Activated B cell treated with CpG ODN at 0.5 μM for 24 hours (primary cell): ENCODE measurements at regions of chr17 and their contacts with region 1.

Region 1: DNA sequence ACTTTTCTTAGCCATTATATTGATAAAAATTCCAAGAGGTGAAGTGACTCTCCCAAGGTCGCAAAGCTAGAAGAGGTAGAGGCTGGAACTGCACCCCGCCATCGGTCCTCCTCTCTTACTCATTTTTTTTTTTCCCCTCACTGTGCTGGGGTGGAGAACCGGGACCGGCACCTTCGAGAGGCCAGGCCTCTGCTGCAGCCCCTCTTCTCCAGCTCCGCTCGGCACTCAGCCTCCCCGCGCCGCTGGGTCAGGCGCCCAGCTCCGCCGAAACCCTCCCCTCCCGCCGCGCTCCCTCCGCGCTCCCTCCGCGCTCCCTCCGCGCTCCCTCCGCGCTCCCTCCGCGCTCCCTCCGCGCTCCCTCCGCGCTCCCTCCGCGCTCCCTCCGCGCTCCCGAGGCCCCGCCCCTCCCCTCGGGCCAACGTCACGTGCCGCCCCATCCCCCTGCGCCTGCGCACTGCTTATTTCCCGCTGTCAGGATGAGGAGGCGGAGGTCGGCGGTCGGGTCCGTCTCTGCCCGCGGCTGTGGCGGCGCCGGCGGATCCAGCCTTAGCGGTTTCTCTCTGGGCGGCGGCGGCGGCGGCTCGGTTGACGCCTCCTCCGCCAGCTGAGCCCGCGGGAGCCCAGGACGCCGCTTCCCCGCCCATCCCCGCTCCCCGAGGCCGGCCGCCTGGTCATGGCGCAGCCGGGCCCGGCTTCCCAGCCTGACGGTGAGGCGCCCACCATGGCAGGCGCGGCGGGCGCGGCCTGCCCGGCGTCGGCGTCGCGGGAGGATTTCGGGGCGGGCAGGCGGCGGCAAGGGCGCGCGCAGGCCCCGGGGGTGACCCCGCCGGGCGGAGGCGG is at the start of gene RABEP1:
- DNase-seq: peak; percentile 90
- ATAC-seq: peak; percentile 82
- H3K4me3 Mint-ChIP-seq: peak within 1 kb of the TSS; percentile 92
- H3K27ac Mint-ChIP-seq: peak within 1 kb of the TSS; percentile 91
- H3K4me1 Mint-ChIP-seq: peaks cover 46% of the 10 kb centered on the region
- H3K27me3 Mint-ChIP-seq: no peaks in the 10 kb centered on the region
- CTCF ChIP-seq: no peak
- total RNA-seq, gene RABEP1: 63.5 and 67.5 TPM in 2 replicates

Region 2: GRCh38 chr17:4509401-4509800 is 772.6 kb before region 1 on chr17:
- CTCF ChIA-PET with region 1: no interaction called
- POLR2A ChIA-PET with region 1: no interaction called
- intact Hi-C with region 1: no loop called
- DNase-seq: no peak
- ATAC-seq: no peak
- H3K4me3 Mint-ChIP-seq: no peak overlapping the region
- H3K27ac Mint-ChIP-seq: no peak overlapping the region
- H3K4me1 Mint-ChIP-seq: peaks cover 2% of the 10 kb centered on the region
- H3K27me3 Mint-ChIP-seq: peaks cover 41% of the 10 kb centered on the region
- CTCF ChIP-seq: no peak

Region 3: DNA sequence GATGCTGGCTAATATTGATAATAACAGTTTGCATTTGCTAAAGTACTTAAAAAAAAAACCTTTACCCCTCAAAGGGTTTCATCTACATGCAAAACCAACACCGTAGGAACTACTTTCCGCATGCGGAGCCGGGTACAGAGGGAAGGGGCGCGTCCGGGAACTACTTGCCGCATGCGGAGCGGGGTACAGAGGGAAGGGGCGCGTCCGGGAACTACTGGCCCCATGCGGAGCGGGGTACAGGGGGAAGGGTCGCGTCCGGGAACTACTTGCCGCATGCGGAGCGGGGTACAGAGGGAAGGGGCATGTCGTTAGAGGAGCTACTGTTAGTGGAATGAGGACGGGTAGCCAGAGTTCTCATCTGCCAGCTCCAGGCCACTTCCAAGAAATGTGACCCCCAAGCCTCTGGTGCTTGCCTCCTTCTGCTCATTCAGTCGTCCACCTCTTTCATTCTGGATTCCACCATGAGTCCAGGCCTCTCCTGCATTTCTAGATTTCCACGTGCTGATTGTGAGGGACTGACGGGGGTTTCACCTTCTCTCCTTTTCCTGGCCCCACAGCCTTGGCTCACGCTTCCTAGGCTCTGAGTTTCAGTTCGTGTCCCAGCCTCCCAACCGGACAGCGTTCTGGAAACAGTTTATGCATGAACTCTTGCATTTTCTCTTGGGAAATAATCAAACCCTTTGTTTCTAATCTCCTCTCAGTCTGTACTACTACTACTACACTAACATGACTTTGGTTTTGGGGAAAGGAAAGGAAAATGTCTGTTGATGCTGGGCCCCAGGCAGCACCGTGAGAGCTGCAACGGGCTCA is 422.0 kb before region 1 on chr17:
- CTCF ChIA-PET with region 1: no interaction called
- POLR2A ChIA-PET with region 1: no interaction called
- intact Hi-C with region 1: no loop called
- DNase-seq: no peak
- ATAC-seq: no peak
- H3K4me3 Mint-ChIP-seq: no peak overlapping the region
- H3K27ac Mint-ChIP-seq: no peak overlapping the region
- H3K4me1 Mint-ChIP-seq: peaks cover 1% of the 10 kb centered on the region
- H3K27me3 Mint-ChIP-seq: no peaks in the 10 kb centered on the region
- CTCF ChIP-seq: no peak

Region 4: GRCh38 chr17:4966844-4967538 is 315.0 kb before region 1 on chr17:
- CTCF ChIA-PET with region 1: no interaction called
- POLR2A ChIA-PET with region 1: no interaction called
- intact Hi-C with region 1: no loop called
- DNase-seq: no peak
- ATAC-seq: peak; percentile 87
- H3K4me3 Mint-ChIP-seq: no peak overlapping the region
- H3K27ac Mint-ChIP-seq: no peak overlapping the region
- H3K4me1 Mint-ChIP-seq: peaks cover 18% of the 10 kb centered on the region
- H3K27me3 Mint-ChIP-seq: no peaks in the 10 kb centered on the region
- CTCF ChIP-seq: no peak

Region 5: DNA sequence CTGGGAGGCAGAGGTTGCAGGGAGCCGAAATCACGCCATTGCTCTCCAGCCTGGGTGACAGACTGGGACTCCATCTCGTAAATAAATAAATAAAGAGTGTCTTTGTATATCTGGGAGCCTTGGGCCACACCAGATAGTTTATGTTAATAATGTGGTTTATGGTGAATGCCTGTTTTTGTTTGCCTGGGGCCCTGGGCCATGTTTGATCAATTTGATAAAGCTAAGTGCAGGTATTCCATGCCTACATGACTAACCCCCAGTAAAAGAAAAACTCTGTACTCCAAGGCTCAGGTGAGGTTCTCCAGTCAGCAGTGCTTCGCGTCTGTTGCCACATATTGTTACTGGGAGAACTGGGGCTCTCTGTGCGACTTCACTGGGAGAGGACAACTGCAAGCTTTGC is 62.5 kb before region 1 on chr17:
- CTCF ChIA-PET with region 1: no interaction called
- POLR2A ChIA-PET with region 1: no interaction called
- intact Hi-C with region 1: no loop called
- DNase-seq: no peak
- ATAC-seq: no peak
- H3K4me3 Mint-ChIP-seq: no peak overlapping the region
- H3K27ac Mint-ChIP-seq: peak overlapping the region; percentile 98
- H3K4me1 Mint-ChIP-seq: peaks cover 63% of the 10 kb centered on the region
- H3K27me3 Mint-ChIP-seq: no peaks in the 10 kb centered on the region
- CTCF ChIP-seq: no peak

Region 6: DNA sequence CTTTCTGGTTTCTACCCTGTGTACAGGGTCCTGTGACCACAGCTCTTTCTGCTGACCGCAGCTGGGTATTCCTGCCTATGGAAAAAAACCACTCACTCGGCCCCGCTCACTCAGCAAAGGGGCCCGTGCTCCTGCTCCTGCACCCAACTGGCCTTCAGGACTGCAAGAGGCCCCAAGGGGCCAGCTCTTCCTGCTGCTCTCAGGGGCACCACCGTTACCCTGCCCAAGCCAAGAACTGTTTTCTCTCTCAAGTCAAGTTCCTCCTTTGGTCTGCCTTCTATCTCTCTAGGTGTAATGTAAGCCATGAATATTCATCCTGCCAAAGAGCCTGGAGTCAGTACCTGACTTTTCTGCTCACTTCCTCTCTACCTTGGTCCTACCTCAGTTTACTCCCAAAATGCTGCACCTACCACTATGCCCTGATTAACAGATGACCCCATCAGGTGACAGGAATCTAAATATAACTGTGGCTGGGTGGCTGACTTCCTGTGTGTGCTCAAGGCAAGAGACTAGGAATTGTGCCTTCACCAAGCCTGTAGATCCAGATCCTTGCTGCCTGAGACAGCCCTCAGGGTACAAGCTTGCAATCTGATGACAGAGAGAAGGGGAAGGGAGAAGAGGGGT is 27.0 kb before region 1 on chr17:
- CTCF ChIA-PET with region 1: no interaction called
- POLR2A ChIA-PET with region 1: interaction called, 37 read pairs
- intact Hi-C with region 1: loop called (anchors 2 kb)
- DNase-seq: no peak
- ATAC-seq: peak; percentile 89
- H3K4me3 Mint-ChIP-seq: peak overlapping the region; percentile 78
- H3K27ac Mint-ChIP-seq: peak overlapping the region; percentile 93
- H3K4me1 Mint-ChIP-seq: peaks cover 70% of the 10 kb centered on the region
- H3K27me3 Mint-ChIP-seq: no peaks in the 10 kb centered on the region
- CTCF ChIP-seq: no peak

Region 7: DNA sequence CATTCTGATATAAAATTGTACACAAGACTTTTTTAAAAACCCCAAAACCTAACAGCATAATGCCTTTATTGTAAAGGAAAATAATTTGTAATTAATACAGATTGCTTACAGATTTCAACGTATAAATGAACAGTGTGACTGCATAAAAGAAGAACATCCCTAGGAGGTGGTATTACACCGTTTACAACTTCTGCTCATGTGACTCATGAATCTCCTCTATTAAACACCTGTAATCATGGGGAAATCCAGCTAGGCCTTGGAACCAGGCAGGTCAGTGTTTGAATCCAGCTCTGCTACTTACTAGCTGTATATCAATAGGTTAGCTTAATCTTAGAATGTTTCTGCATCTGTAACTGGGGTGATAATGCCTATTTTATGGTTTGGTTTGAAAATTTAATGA is 15.2 kb after region 1 on chr17:
- CTCF ChIA-PET with region 1: no interaction called
- POLR2A ChIA-PET with region 1: interaction called, 7 read pairs
- intact Hi-C with region 1: loop called (anchors 2 kb)
- DNase-seq: no peak
- ATAC-seq: peak; percentile 77
- H3K4me3 Mint-ChIP-seq: no peak overlapping the region
- H3K27ac Mint-ChIP-seq: peak overlapping the region; percentile 57
- H3K4me1 Mint-ChIP-seq: peaks cover 62% of the 10 kb centered on the region
- H3K27me3 Mint-ChIP-seq: no peaks in the 10 kb centered on the region
- CTCF ChIP-seq: no peak

Region 8: GRCh38 chr17:5304636-5305035 is 22.6 kb after region 1 on chr17:
- CTCF ChIA-PET with region 1: interaction called, 9 read pairs
- POLR2A ChIA-PET with region 1: interaction called, 14 read pairs
- intact Hi-C with region 1: no loop called
- DNase-seq: no peak
- ATAC-seq: no peak
- H3K4me3 Mint-ChIP-seq: no peak overlapping the region
- H3K27ac Mint-ChIP-seq: no peak overlapping the region
- H3K4me1 Mint-ChIP-seq: peaks cover 68% of the 10 kb centered on the region
- H3K27me3 Mint-ChIP-seq: no peaks in the 10 kb centered on the region
- CTCF ChIP-seq: no peak

Region 9: GRCh38 chr17:5309851-5310250 is 27.8 kb after region 1 on chr17:
- CTCF ChIA-PET with region 1: interaction called, 9 read pairs
- POLR2A ChIA-PET with region 1: interaction called, 14 read pairs
- intact Hi-C with region 1: no loop called
- DNase-seq: no peak
- ATAC-seq: peak; percentile 31
- H3K4me3 Mint-ChIP-seq: no peak overlapping the region
- H3K27ac Mint-ChIP-seq: no peak overlapping the region
- H3K4me1 Mint-ChIP-seq: peaks cover 56% of the 10 kb centered on the region
- H3K27me3 Mint-ChIP-seq: no peaks in the 10 kb centered on the region
- CTCF ChIP-seq: no peak

Region 10: DNA sequence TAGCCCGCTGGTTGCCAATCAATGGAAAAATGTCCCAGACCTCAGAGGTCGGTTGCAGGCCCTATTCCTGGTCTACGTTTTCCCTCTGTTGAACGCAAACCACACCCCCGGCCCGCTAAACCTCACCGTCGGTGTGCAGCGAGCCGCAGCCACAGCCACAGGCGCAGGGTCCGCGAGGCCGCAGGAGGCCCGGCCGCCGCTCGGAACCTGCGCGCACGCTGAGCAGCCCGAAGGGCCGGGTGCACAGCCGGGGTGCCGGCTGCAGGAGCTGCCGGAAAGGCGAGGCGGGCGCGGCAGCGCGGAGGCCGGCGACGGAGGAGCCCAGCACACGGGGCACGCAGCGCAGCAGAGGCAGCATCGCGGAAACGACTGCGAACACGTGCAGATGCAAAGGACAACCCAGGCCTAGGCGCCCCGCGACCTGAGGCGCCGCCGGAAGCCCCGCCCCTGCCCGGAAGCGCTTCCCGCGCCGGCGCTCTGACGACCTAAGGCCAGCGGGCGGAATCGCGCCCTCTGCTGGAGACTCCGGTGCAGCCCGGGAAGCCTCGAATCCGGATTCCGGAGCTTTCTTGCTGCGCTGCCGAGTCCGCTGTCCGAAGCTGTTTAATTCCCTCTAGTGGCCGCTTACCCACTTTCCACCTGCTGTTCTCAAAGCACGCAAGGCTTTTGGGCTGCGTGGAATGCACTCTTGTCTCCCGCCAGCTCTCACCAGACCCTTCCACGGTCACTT is 156.8 kb after region 1 on chr17 and contains the start of gene C1QBP:
- CTCF ChIA-PET with region 1: no interaction called
- POLR2A ChIA-PET with region 1: interaction called, 5 read pairs
- intact Hi-C with region 1: loop called (anchors 1 kb)
- DNase-seq: peak; percentile 95
- ATAC-seq: peak; percentile 91
- H3K4me3 Mint-ChIP-seq: peak within 1 kb of the TSS; percentile 83
- H3K27ac Mint-ChIP-seq: peak within 1 kb of the TSS; percentile 91
- H3K4me1 Mint-ChIP-seq: peaks cover 32% of the 10 kb centered on the region
- H3K27me3 Mint-ChIP-seq: no peaks in the 10 kb centered on the region
- CTCF ChIP-seq: peak; percentile 96
- total RNA-seq, gene C1QBP: 160 and 177 TPM in 2 replicates